ENCODE measurements at regions of chr10 and their contacts with region 1.

Region 1: DNA sequence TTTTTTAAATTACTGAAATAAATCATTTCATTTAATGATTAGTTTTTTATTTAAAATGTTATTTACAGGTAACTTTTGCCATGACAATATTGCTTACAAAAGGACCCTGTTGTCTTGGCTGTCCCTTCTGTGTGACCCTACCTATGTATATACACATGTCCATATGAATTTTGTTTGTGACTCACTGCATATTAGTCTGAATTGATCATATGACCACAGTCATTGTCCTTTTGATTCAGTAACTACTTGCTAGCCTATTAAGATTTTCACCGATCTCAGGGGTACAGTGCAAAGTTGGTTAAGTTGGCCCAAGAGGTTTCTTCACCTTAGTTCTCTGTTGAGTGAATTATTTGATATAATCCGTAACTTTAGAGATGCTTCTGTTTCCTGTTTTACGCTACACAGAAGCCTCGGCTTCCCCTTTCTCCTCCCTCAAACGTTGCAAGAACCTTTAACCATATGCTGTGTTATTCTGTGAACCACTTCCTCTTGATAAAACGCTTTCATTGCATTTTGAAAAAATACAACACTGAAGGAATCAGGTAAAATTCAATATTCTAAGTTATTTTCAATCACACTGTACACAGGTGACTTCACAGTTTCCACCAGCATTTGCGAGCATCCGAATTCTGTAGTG is 43.9 kb downstream of the APBB1IP start:
- DNase-seq: peak; percentile 63
- ATAC-seq: peak; percentile 48
- H3K4me3 Mint-ChIP-seq: peak overlapping the region; percentile 75
- H3K27ac Mint-ChIP-seq: peak overlapping the region; percentile 98
- H3K4me1 Mint-ChIP-seq: peaks cover 76% of the 10 kb centered on the region
- H3K27me3 Mint-ChIP-seq: no peaks in the 10 kb centered on the region

Region 2: DNA sequence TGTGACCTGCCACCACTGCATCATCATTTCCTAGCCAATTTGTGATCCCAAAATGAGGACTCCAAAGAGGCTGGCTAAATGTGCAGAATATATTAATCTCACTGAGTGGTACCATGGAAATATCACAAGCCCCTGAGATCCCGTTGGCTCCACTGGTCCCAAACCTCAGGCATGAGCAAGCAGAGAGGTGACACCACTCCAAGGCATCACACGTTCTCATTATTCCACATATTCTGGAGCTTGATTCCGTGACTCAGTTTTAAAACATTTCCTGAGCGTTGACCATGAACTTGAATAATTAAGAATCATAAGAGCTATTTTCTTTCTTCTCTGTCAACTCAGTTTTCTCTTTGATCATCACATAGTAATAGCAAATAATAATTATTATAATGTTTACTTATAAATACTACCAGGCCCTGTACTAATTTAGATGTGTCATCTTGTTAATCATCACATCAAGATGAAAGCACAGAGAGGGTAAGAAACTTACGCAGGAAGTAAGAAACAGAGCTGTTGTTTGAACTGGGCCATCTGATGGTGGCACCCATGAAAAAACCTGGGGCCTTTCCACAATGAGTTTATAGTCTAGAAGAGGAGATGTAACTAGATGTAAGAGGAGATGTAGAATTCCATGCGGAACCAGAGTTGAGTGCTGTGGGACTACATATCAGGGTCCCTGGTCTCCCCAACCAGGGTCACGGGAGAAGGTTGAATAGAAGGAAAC is 40.4 kb before region 1 on chr10:
- CTCF ChIA-PET with region 1: interaction called, 10 read pairs
- DNase-seq: no peak
- ATAC-seq: no peak
- H3K4me3 Mint-ChIP-seq: peak overlapping the region; percentile 74
- H3K27ac Mint-ChIP-seq: peak overlapping the region; percentile 87
- H3K4me1 Mint-ChIP-seq: peaks cover 58% of the 10 kb centered on the region
- H3K27me3 Mint-ChIP-seq: no peaks in the 10 kb centered on the region

Region 3: GRCh38 chr10:26448706-26449435 is 33.2 kb before region 1 on chr10:
- CTCF ChIA-PET with region 1: interaction called, 10 read pairs
- DNase-seq: peak; percentile 91
- ATAC-seq: peak; percentile 70
- H3K4me3 Mint-ChIP-seq: peak overlapping the region; percentile 68
- H3K27ac Mint-ChIP-seq: peak overlapping the region; percentile 92
- H3K4me1 Mint-ChIP-seq: peaks cover 76% of the 10 kb centered on the region
- H3K27me3 Mint-ChIP-seq: no peaks in the 10 kb centered on the region

Region 4: GRCh38 chr10:26468700-26469099 is 13.3 kb before region 1 on chr10:
- CTCF ChIA-PET with region 1: interaction called, 10 read pairs
- DNase-seq: peak; percentile 79
- ATAC-seq: peak; percentile 82
- H3K4me3 Mint-ChIP-seq: peak overlapping the region; percentile 65
- H3K27ac Mint-ChIP-seq: peak overlapping the region; percentile 82
- H3K4me1 Mint-ChIP-seq: peaks cover 86% of the 10 kb centered on the region
- H3K27me3 Mint-ChIP-seq: no peaks in the 10 kb centered on the region

Region 5: DNA sequence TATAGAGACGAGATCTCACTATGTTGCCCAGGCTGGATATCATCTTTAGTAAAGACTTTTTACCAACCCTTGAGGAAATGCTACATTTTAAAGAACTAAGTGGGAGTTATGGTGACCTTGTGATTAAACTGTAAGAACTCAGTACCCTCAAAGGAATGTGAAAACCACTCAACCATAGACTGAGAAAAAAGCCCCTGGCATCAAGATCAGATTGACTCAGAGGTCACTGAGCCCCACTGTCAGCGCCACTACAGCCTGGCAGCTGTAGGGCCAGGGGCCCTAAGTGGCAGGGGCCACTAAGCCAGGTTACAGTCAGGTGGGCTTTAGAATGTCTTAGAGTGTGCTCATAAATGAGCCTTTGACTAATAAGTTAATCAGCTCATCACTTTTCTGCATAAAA is 12.0 kb after region 1 on chr10:
- CTCF ChIA-PET with region 1: no interaction called
- DNase-seq: no peak
- ATAC-seq: no peak
- H3K4me3 Mint-ChIP-seq: no peak overlapping the region
- H3K27ac Mint-ChIP-seq: no peak overlapping the region
- H3K4me1 Mint-ChIP-seq: peaks cover 1% of the 10 kb centered on the region
- H3K27me3 Mint-ChIP-seq: no peaks in the 10 kb centered on the region